Colonic mucosa (tissue), 4 donors: ENCODE measurements at regions of chr17 and their contacts with region 1.

Region 1: GRCh38 chr17:28494445-28495188 is 11.5 kb upstream of the FOXN1 start:
- DNase-seq: peak; percentile 84
- H3K4me3 ChIP-seq: no peak overlapping the region
- H3K27ac ChIP-seq: no peak overlapping the region
- H3K4me1 ChIP-seq: no peaks in the 10 kb centered on the region
- H3K27me3 ChIP-seq: no peaks in the 10 kb centered on the region
- CTCF ChIP-seq: peak; percentile 89

Region 2: DNA sequence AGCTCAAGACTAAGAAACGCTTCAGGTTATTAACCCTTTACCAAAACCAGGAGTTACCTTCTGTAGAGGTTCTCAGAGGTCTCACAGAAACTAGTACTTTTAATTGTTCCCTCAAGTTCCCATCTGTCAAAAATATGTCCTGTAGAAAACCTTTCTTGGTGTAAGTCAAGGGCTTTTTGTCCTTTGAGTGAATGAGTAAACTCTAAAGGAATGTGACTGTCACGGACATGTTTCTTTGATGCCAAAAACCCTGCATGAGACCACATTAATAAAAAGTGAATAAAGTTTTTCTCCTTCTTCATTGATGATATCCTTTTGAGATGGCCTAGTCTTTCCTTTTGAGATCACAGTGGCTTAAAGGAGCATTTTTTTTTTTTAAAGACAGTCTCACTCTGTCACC is 349.3 kb before region 1 on chr17:
- intact Hi-C with region 1: no loop called
- DNase-seq: no peak
- H3K4me3 ChIP-seq: no peak overlapping the region
- H3K27ac ChIP-seq: no peak overlapping the region
- H3K4me1 ChIP-seq: no peaks in the 10 kb centered on the region
- H3K27me3 ChIP-seq: no peaks in the 10 kb centered on the region
- CTCF ChIP-seq: no peak

Region 3: DNA sequence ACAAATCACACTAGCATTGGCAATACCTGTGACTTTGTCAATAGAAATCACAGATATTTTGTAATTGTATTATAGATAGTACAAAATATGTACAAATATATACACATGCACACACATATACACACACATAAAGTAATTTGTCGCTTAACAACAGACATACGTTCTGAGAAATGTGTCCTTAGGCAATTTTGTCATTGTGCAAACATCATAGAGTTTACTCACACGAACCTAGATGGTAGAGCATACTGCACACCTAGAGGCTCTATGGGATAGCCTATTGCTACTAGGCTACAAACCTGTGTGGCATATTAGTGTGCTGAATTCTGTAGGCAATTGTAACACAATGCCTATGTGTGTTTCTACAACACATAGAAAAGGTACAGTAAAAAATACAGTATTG is 46.8 kb after region 1 on chr17:
- intact Hi-C with region 1: loop called (anchors 1 kb)
- DNase-seq: no peak
- H3K4me3 ChIP-seq: no peak overlapping the region
- H3K27ac ChIP-seq: no peak overlapping the region
- H3K4me1 ChIP-seq: no peaks in the 10 kb centered on the region
- H3K27me3 ChIP-seq: no peaks in the 10 kb centered on the region
- CTCF ChIP-seq: no peak